ENCODE measurements at regions of chr15 and their contacts with region 1.

Region 1: DNA sequence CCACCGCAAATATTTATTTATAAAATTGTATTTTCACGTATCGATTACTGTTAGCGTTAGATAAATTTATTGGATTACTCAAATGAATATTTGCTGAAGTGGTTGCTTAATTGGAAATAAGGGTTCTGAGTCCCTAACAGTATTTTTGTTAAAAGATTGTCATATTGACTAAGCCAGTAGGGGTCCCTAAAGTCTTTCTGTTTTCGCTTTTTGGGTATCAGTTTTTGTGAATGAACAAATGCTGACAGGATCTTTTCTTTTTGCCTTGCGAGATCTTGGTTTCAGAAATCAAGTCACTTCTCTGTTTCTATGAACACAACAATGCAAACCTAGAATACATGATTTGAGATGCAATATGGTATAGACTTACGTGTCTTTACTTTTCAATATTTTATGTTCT is 7.1 kb downstream of the RAD51 start:
- DNase-seq: no peak

Region 2: GRCh38 chr15:40108855-40109735 is 593.0 kb before region 1 on chr15 and contains the start of gene BMF:
- intact Hi-C with region 1: loop called in 1 of 2 experiments (anchors 10 kb)
- DNase-seq: peak; percentile 100
- total RNA-seq, gene BMF: 3.0 to 5.0 TPM

Region 3: DNA sequence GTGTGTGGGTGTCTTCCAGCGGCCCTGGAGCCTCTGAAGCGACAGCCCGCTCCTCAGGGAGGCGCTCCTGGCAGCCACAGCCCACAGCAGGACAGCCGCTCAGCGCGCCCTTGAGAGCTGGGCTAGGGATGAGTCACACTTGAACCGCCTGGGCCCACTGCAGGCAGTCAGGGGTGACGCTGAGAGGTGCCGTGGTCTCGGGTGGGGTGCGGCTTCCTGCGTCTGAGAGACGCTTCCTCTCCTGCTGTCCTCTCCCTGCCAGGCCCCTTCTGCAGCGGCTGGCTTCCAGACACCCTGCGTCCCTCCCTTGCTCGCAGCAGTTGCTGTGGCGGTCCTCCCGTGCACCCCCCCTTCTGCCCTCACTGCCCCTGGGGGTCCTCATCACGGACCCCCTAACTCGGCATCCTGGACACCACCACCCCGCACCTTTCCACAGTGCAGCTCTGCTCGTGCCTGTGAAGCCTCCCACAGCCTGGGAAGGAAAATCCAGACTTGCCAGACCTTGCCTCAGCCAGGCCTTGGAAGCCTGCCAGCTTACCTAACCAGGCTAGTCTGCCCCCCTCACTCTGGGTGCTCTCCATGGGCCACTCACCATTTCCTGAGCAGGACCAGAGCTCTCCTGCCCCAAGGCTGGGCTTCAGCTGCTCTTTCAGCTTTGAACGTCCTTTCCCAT is 1192.8 kb after region 1 on chr15:
- intact Hi-C with region 1: loop called in 1 of 2 experiments (anchors 10 kb)
- DNase-seq: peak; percentile 93